ENCODE measurements at regions of chr15 and their contacts with region 1.

Region 1: GRCh38 chr15:35519541-35520149 is 26.3 kb downstream of the DPH6 start:
- DNase-seq: no peak

Region 2: GRCh38 chr15:35751413-35752133 is 231.9 kb after region 1 on chr15:
- intact Hi-C with region 1: loop called (anchors 5 kb)
- DNase-seq: no peak

Region 3: GRCh38 chr15:35912196-35912595 is 392.6 kb after region 1 on chr15:
- intact Hi-C with region 1: loop called (anchors 5 kb)
- DNase-seq: no peak

Region 4: GRCh38 chr15:37134699-37135131 is 1615.1 kb after region 1 on chr15:
- intact Hi-C with region 1: loop called (anchors 10 kb)
- DNase-seq: no peak

Measured in cardiac septum (tissue), 1 donor.